B cell (primary cell): ENCODE measurements at regions of chr5 and their contacts with region 1.

Region 1: DNA sequence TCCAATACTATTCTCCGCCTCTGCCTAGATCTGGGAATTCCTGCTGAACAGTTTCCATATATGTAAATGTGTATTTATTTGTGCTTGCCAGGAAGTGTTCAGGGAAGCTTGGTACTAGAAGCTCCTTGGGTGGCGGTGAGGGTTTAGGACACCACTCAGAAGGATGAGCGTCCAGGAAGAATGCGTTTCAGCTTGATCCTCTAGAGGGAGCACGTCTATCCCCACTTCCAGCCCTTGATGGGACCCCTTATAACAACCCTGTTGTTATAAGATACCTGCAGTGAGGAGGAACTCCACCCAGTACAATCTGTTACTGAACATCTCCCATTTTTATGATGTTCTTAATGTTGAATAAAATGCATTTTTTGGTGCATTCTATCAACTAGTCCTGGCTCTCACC is 88.9 kb downstream of the CYFIP2 start:
- DNase-seq: no peak
- ATAC-seq: no peak
- H3K4me3 ChIP-seq: no peak overlapping the region
- H3K4me3 Mint-ChIP-seq: no peak overlapping the region
- H3K27ac ChIP-seq: no peak overlapping the region
- H3K27ac Mint-ChIP-seq: no peak overlapping the region
- H3K4me1 ChIP-seq: no peaks in the 10 kb centered on the region
- H3K4me1 Mint-ChIP-seq: peaks cover 9% of the 10 kb centered on the region
- H3K27me3 ChIP-seq: no peaks in the 10 kb centered on the region
- H3K27me3 Mint-ChIP-seq: no peaks in the 10 kb centered on the region
- CTCF ChIP-seq: no peak

Region 2: DNA sequence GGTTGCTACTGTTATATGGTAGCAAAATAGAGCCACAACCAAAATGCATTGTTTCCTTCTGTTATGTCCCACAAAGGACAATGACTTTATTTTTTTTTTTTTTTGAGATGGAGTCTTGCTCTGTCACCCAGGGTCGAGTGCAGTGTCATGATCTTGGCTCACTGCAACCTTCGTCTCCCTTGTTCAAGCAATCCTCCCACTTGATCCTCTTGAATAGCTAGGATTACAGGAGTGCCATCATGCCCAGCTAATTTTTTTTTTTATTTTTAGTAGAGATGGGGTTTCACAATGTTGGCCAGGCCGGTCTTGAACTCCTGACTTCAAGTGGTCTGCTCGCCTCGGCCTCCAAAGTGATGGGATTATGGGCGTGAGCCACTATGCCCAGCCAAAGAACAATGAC is 1555.5 kb before region 1 on chr5:
- CTCF ChIA-PET with region 1: no interaction called
- POLR2A ChIA-PET with region 1: no interaction called
- intact Hi-C with region 1: no loop called
- DNase-seq: no peak
- ATAC-seq: no peak
- H3K4me3 ChIP-seq: no peak overlapping the region
- H3K4me3 Mint-ChIP-seq: no peak overlapping the region
- H3K27ac ChIP-seq: no peak overlapping the region
- H3K27ac Mint-ChIP-seq: no peak overlapping the region
- H3K4me1 ChIP-seq: no peaks in the 10 kb centered on the region
- H3K4me1 Mint-ChIP-seq: no peaks in the 10 kb centered on the region
- H3K27me3 ChIP-seq: no peaks in the 10 kb centered on the region
- H3K27me3 Mint-ChIP-seq: no peaks in the 10 kb centered on the region
- CTCF ChIP-seq: no peak

Region 3: GRCh38 chr5:157342822-157343402 is 11.9 kb before region 1 on chr5:
- CTCF ChIA-PET with region 1: interaction called, 44 read pairs
- POLR2A ChIA-PET with region 1: no interaction called
- intact Hi-C with region 1: no loop called
- DNase-seq: peak; percentile 52
- ATAC-seq: peak; percentile 49
- H3K4me3 ChIP-seq: no peak overlapping the region
- H3K4me3 Mint-ChIP-seq: no peak overlapping the region
- H3K27ac ChIP-seq: no peak overlapping the region
- H3K27ac Mint-ChIP-seq: no peak overlapping the region
- H3K4me1 ChIP-seq: no peaks in the 10 kb centered on the region
- H3K4me1 Mint-ChIP-seq: no peaks in the 10 kb centered on the region
- H3K27me3 ChIP-seq: no peaks in the 10 kb centered on the region
- H3K27me3 Mint-ChIP-seq: no peaks in the 10 kb centered on the region
- CTCF ChIP-seq: peak; percentile 70

Region 4: DNA sequence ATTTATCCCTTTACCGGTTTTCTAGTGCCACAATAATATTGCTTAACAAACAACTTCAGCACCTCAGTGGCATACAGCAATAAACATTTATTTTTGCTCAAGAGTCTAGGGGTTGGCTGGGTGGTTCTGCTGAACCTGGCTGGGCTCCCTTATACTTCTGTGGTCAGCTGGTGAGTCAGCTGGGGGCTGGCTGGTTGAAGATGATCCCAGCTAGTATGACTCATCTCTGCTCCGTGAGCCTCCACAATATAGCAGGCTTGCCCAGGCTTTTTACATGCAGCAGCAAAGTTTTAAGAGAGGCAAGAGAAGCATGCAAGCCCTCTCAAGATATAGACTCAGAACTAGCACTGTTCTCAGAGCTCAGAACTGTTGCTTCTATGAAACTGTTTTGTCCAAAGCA is 1027.7 kb after region 1 on chr5:
- CTCF ChIA-PET with region 1: no interaction called
- POLR2A ChIA-PET with region 1: no interaction called
- intact Hi-C with region 1: no loop called
- DNase-seq: no peak
- ATAC-seq: peak; percentile 53
- H3K4me3 ChIP-seq: no peak overlapping the region
- H3K4me3 Mint-ChIP-seq: no peak overlapping the region
- H3K27ac ChIP-seq: no peak overlapping the region
- H3K27ac Mint-ChIP-seq: no peak overlapping the region
- H3K4me1 ChIP-seq: no peaks in the 10 kb centered on the region
- H3K4me1 Mint-ChIP-seq: no peaks in the 10 kb centered on the region
- H3K27me3 ChIP-seq: no peaks in the 10 kb centered on the region
- H3K27me3 Mint-ChIP-seq: no peaks in the 10 kb centered on the region
- CTCF ChIP-seq: no peak